AG04450 (cell line): ENCODE measurements at regions of chr7 and their contacts with region 1.

Region 1: GRCh38 chr7:24812310-24812945 is 55.2 kb upstream of the GSDME start:
- DNase-seq: no peak
- H3K4me3 ChIP-seq: no peak overlapping the region
- H3K27ac ChIP-seq: no peak overlapping the region
- H3K27me3 ChIP-seq: no peaks in the 10 kb centered on the region
- CTCF ChIP-seq: peak; percentile 90

Region 2: GRCh38 chr7:24757353-24758275 is 54.8 kb before region 1 on chr7 and contains the start of gene GSDME:
- CTCF ChIA-PET with region 1: interaction called, 19 read pairs
- POLR2A ChIA-PET with region 1: no interaction called
- DNase-seq: peak; percentile 15
- H3K4me3 ChIP-seq: peak within 1 kb of the TSS; percentile 78
- H3K27ac ChIP-seq: peak within 1 kb of the TSS; percentile 90
- H3K27me3 ChIP-seq: no peaks in the 10 kb centered on the region
- CTCF ChIP-seq: no peak
- polyA plus RNA-seq, gene GSDME: 58.3 and 63.8 TPM in 2 replicates

Region 3: DNA sequence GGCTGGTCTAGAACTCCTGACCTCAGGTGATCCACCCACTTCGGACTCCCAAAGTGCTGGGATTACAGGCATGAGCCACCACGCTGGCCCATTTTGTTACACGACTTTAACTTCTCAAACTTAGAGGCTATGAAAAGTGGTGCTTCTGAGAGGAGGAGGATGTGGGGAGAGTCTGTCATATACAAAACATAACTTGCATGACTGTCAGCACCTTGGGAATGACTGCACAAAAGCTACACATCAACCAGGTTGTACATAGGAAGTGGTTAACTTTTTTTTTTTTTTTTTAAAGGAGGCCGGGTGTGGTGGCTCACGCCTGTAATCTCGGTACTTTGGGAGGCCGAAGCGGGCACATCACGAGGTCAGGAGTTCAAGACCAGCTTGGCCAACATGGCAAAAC is 11.8 kb before region 1 on chr7:
- CTCF ChIA-PET with region 1: interaction called, 100 read pairs
- POLR2A ChIA-PET with region 1: no interaction called
- DNase-seq: no peak
- H3K4me3 ChIP-seq: no peak overlapping the region
- H3K27ac ChIP-seq: no peak overlapping the region
- H3K27me3 ChIP-seq: no peaks in the 10 kb centered on the region
- CTCF ChIP-seq: no peak

Region 4: DNA sequence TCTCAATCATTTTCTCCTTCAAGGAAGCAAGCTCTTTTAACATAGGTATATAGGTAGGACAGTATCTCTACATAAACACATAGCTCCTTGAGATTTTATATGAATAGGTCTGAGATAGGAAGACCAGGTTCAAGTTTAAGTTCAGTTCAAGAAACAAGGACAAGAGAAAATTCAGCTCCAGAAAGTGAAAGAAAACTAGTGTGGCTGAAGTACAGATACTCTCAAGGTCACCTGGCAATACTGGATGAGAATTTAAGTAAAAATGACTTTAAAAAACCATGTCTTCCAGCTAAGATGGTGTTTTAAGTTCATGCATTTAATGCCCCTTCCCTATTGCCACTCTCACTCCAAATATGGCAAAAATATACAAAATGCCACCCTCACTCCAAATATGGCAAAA is 76.2 kb after region 1 on chr7:
- CTCF ChIA-PET with region 1: interaction called, 13 read pairs
- POLR2A ChIA-PET with region 1: no interaction called
- DNase-seq: no peak
- H3K4me3 ChIP-seq: no peak overlapping the region
- H3K27ac ChIP-seq: no peak overlapping the region
- H3K27me3 ChIP-seq: no peaks in the 10 kb centered on the region
- CTCF ChIP-seq: no peak

Region 5: DNA sequence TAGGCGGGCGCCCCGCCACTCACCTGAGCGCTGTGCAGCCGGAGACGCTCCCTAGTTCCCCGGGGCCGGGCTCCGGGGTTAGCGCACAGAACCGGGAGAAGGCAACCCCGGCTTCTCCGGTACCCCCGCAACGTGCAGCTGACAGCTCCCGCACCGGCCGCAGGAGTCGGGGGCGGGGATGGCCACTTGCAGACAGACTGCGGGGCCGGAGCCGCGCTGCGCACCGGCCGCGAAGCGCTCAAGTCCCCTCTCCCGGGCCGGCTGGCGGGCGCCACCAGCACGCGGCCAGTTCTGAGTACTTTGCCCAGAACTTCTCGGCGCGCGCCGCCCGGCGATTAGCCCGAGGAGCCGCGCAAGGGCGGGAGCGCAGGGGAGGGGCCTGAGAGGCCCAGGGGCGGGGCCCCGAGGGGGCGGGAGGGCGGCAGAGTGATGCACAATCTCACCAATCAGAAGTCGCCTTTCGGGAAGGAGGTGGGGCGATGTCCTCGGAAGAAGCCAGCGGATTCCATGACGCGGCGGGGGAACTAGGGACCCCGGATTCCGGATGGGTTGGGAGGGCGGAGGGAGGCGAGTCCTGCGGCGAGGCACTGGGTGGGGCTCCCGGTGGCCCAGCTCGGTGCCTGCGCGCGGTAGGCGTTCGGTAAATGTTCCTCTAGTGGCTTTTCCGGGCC is 167.6 kb after region 1 on chr7 and contains the start of gene OSBPL3:
- CTCF ChIA-PET with region 1: interaction called, 36 read pairs
- POLR2A ChIA-PET with region 1: no interaction called
- DNase-seq: peak; percentile 91
- H3K4me3 ChIP-seq: peak within 1 kb of the TSS; percentile 79
- H3K27ac ChIP-seq: peak within 1 kb of the TSS; percentile 91
- H3K27me3 ChIP-seq: no peaks in the 10 kb centered on the region
- CTCF ChIP-seq: no peak
- polyA plus RNA-seq, gene OSBPL3: 33.3 and 37.8 TPM in 2 replicates

Region 6: GRCh38 chr7:25093268-25093826 is 280.9 kb after region 1 on chr7:
- CTCF ChIA-PET with region 1: interaction called, 328 read pairs
- POLR2A ChIA-PET with region 1: no interaction called
- DNase-seq: peak; percentile 30
- H3K4me3 ChIP-seq: no peak overlapping the region
- H3K27ac ChIP-seq: no peak overlapping the region
- H3K27me3 ChIP-seq: no peaks in the 10 kb centered on the region
- CTCF ChIP-seq: peak; percentile 92